CD4-positive, alpha-beta T cell (primary cell): ENCODE measurements at regions of chr1 and their contacts with region 1.

Region 1: DNA sequence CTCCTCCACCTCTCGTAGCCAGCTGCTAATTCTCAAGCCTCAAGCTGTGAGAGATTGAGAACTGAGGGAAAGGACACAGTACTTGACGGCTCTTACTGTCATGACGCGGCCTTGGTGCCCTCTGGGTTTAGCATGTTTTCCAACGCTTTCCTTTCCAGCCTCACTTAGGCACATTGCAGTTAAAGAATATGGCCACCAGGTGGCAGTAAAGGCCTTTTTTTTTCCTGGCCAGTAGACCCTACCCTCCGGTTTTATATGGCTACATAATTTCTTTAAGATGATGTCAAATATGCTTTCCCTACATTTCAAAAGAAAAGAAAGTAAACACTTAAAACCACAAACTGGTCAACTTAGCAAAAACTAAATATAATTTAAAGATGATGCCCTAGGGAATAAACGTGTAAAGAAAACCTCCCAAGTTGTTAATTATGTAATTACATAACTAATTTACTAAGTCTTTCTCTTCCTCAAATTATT is 56.8 kb upstream of the PRDX6 start:
- DNase-seq: peak; percentile 12 to 84 (median 38)
- ATAC-seq: peak; percentile 96
- H3K4me3 ChIP-seq: no peak overlapping the region
- H3K4me3 Mint-ChIP-seq: no peak overlapping the region
- H3K27ac ChIP-seq: no peak overlapping the region
- H3K27ac Mint-ChIP-seq: no peak overlapping the region
- H3K4me1 ChIP-seq: peaks cover 4% of the 10 kb centered on the region
- H3K4me1 Mint-ChIP-seq: peaks cover 7% of the 10 kb centered on the region
- H3K27me3 ChIP-seq: no peaks in the 10 kb centered on the region
- H3K27me3 Mint-ChIP-seq: no peaks in the 10 kb centered on the region
- CTCF ChIP-seq: peak; percentile 91

Region 2: GRCh38 chr1:172602706-172603105 is 817.7 kb before region 1 on chr1:
- CTCF ChIA-PET with region 1: no interaction called
- POLR2A ChIA-PET with region 1: no interaction called
- intact Hi-C with region 1: loop called in 1 of 2 experiments (anchors 5 kb)
- DNase-seq: no peak
- ATAC-seq: no peak
- H3K4me3 ChIP-seq: no peak overlapping the region
- H3K4me3 Mint-ChIP-seq: no peak overlapping the region
- H3K27ac ChIP-seq: no peak overlapping the region
- H3K27ac Mint-ChIP-seq: no peak overlapping the region
- H3K4me1 ChIP-seq: no peaks in the 10 kb centered on the region
- H3K4me1 Mint-ChIP-seq: no peaks in the 10 kb centered on the region
- H3K27me3 ChIP-seq: no peaks in the 10 kb centered on the region
- H3K27me3 Mint-ChIP-seq: no peaks in the 10 kb centered on the region
- CTCF ChIP-seq: no peak

Region 3: DNA sequence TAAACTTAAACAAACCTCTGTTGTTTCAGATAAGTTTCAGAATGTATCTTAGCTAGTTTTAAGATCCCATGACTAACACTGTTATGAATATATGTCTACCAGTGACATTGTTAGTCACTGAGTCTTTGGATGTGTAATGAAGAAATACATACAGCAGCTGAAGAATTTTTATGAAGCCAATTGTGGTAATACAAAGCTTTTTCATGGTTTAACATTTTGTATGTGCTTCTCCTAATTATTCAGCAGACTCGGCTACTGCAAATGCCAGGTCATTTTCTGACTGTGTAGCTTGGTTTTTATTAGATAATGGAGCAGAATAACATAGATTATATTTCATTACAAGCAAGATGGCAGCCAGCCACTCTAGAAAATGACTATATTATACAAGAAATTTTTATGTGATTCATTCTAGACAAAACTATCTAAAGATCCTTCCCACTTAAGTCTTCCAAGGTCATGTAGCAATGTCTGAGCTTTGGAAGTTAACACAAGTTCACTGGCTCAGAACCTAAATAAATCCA is 517.4 kb before region 1 on chr1:
- CTCF ChIA-PET with region 1: no interaction called
- POLR2A ChIA-PET with region 1: no interaction called
- intact Hi-C with region 1: no loop called
- DNase-seq: no peak
- ATAC-seq: no peak
- H3K4me3 ChIP-seq: no peak overlapping the region
- H3K4me3 Mint-ChIP-seq: no peak overlapping the region
- H3K27ac ChIP-seq: no peak overlapping the region
- H3K27ac Mint-ChIP-seq: no peak overlapping the region
- H3K4me1 ChIP-seq: peaks cover 9% of the 10 kb centered on the region
- H3K4me1 Mint-ChIP-seq: peaks cover 52% of the 10 kb centered on the region
- H3K27me3 ChIP-seq: no peaks in the 10 kb centered on the region
- H3K27me3 Mint-ChIP-seq: no peaks in the 10 kb centered on the region
- CTCF ChIP-seq: no peak

Region 4: GRCh38 chr1:173714759-173715537 is 294.6 kb after region 1 on chr1 and contains the start of gene KLHL20:
- CTCF ChIA-PET with region 1: no interaction called
- POLR2A ChIA-PET with region 1: no interaction called
- intact Hi-C with region 1: loop called in 1 of 2 experiments (anchors 5 kb)
- DNase-seq: peak; percentile 70 to 94 (median 81)
- ATAC-seq: peak; percentile 97
- H3K4me3 ChIP-seq: peak within 1 kb of the TSS; percentile 63
- H3K4me3 Mint-ChIP-seq: peak within 1 kb of the TSS; percentile 97
- H3K27ac ChIP-seq: peak within 1 kb of the TSS; percentile 73 to 81
- H3K27ac Mint-ChIP-seq: peak within 1 kb of the TSS; percentile 91
- H3K4me1 ChIP-seq: peaks cover 8% of the 10 kb centered on the region
- H3K4me1 Mint-ChIP-seq: peaks cover 36% of the 10 kb centered on the region
- H3K27me3 ChIP-seq: peaks cover 4 to 19% of the 10 kb centered on the region in 2 experiments
- H3K27me3 Mint-ChIP-seq: peaks cover 18% of the 10 kb centered on the region
- CTCF ChIP-seq: no peak
- total RNA-seq, gene KLHL20: 29.4 to 30.4 TPM

Region 5: DNA sequence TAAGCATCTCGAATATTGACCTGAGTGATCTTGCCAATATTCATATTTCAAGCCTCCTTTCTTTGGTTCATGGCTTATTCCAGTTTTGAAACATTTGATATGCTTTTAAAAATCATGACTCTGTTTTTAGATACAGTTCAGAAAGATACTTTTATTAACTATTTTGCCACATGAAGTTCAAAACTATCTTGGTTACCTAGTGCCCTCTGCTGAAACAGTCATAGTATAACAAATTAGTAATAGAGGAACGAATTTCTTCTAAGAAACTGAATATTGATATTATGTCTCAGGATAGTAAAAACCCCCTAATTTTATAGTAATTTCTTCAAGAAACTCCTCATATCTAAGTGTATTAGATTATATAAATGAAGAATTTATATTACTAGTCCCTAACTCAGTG is 654.4 kb after region 1 on chr1:
- CTCF ChIA-PET with region 1: no interaction called
- POLR2A ChIA-PET with region 1: no interaction called
- intact Hi-C with region 1: loop called (anchors 5 kb)
- DNase-seq: peak in 3 of 14 experiments; percentile 16 to 30 (median 25)
- ATAC-seq: no peak
- H3K4me3 ChIP-seq: no peak overlapping the region
- H3K4me3 Mint-ChIP-seq: no peak overlapping the region
- H3K27ac ChIP-seq: no peak overlapping the region
- H3K27ac Mint-ChIP-seq: no peak overlapping the region
- H3K4me1 ChIP-seq: no peaks in the 10 kb centered on the region
- H3K4me1 Mint-ChIP-seq: no peaks in the 10 kb centered on the region
- H3K27me3 ChIP-seq: no peaks in the 10 kb centered on the region
- H3K27me3 Mint-ChIP-seq: no peaks in the 10 kb centered on the region
- CTCF ChIP-seq: peak; percentile 32

Region 6: GRCh38 chr1:174217787-174218574 is 797.6 kb after region 1 on chr1:
- CTCF ChIA-PET with region 1: no interaction called
- POLR2A ChIA-PET with region 1: no interaction called
- intact Hi-C with region 1: loop called in 1 of 2 experiments (anchors 5 kb)
- DNase-seq: peak in 3 of 14 experiments; percentile 55 to 66 (median 65)
- ATAC-seq: peak; percentile 79
- H3K4me3 ChIP-seq: no peak overlapping the region
- H3K4me3 Mint-ChIP-seq: no peak overlapping the region
- H3K27ac ChIP-seq: no peak overlapping the region
- H3K27ac Mint-ChIP-seq: no peak overlapping the region
- H3K4me1 ChIP-seq: no peaks in the 10 kb centered on the region
- H3K4me1 Mint-ChIP-seq: no peaks in the 10 kb centered on the region
- H3K27me3 ChIP-seq: no peaks in the 10 kb centered on the region
- H3K27me3 Mint-ChIP-seq: no peaks in the 10 kb centered on the region
- CTCF ChIP-seq: peak; percentile 88

Region 7: DNA sequence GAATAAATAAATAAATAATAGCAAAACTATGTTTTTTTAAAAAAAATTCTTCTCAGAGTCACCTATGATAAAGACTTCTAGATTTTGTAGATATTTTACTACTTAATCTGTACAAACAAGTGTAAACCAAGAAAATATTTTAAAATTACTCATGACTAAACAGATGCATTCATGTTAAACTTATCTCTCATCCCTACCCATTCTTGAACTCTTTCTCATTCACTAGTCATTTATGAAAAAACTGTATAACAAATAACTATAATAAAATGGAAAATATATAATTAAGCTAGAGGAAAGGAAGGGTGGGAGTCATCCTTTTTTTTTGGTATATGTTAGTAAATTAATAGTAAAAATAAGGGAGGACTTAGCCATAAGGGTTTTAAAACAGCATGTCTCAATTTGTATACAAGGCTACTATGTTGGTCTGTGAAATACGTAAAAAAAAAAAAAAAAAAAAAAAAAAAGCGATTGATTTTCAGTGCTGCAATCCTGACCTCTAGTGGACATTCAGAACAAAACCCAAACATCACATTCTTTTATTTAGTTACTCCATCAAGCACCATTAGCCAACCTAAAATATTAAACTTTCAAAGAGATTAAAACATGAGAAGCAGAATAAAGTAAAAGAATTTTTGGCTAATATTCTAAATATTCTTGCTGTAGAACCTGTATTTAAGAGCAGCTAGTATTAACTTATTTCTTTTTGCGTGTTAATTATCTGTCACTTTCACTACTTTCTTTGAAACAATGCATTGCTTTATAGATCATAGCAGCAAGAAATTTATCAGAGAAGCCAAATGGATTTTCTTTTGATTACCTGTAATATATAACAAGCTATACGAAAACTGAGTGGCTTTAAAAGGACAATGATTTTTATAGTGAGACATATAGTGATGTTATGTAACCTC is 1323.5 kb after region 1 on chr1:
- CTCF ChIA-PET with region 1: no interaction called
- POLR2A ChIA-PET with region 1: no interaction called
- intact Hi-C with region 1: loop called (anchors 5 to 10 kb)
- DNase-seq: peak in 3 of 14 experiments; percentile 56 to 72 (median 71)
- ATAC-seq: peak; percentile 44
- H3K4me3 ChIP-seq: no peak overlapping the region
- H3K4me3 Mint-ChIP-seq: no peak overlapping the region
- H3K27ac ChIP-seq: no peak overlapping the region
- H3K27ac Mint-ChIP-seq: no peak overlapping the region
- H3K4me1 ChIP-seq: peaks cover 3% of the 10 kb centered on the region
- H3K4me1 Mint-ChIP-seq: peaks cover 9% of the 10 kb centered on the region
- H3K27me3 ChIP-seq: no peaks in the 10 kb centered on the region
- H3K27me3 Mint-ChIP-seq: no peaks in the 10 kb centered on the region
- CTCF ChIP-seq: peak; percentile 87